Endothelial cell of umbilical vein (primary cell): ENCODE measurements at regions of chr7 and their contacts with region 1.

Region 1: GRCh38 chr7:22726345-22727185 is 435 bp upstream of the IL6 start:
- DNase-seq: peak; percentile 84
- H3K4me3 ChIP-seq: peak overlapping the region; percentile 21 to 84 (median 42)
- H3K27ac ChIP-seq: peak overlapping the region; percentile 93
- H3K4me1 ChIP-seq: peaks cover 51% of the 10 kb centered on the region
- H3K27me3 ChIP-seq: no peaks in the 10 kb centered on the region
- CTCF ChIP-seq: peak; percentile 56 to 62
- POLR2A ChIP-seq: no peak

Region 2: GRCh38 chr7:22577396-22578001 is 149.1 kb before region 1 on chr7:
- CTCF ChIA-PET with region 1: interaction called, 88 read pairs
- POLR2A ChIA-PET with region 1: interaction called, 20 read pairs
- dilution Hi-C with region 1: loop called (anchors 25 kb)
- intact Hi-C with region 1: loop called (anchors 1 kb)
- DNase-seq: peak; percentile 94
- H3K4me3 ChIP-seq: peak overlapping the region in 1 of 3 experiments; percentile 34
- H3K27ac ChIP-seq: peak overlapping the region; percentile 99
- H3K4me1 ChIP-seq: peaks cover 47% of the 10 kb centered on the region
- H3K27me3 ChIP-seq: no peaks in the 10 kb centered on the region
- CTCF ChIP-seq: no peak
- POLR2A ChIP-seq: peak; percentile 20

Region 3: GRCh38 chr7:22601812-22602565 is 124.6 kb before region 1 on chr7:
- CTCF ChIA-PET with region 1: interaction called, 11 read pairs
- POLR2A ChIA-PET with region 1: no interaction called
- dilution Hi-C with region 1: no loop called
- intact Hi-C with region 1: no loop called
- DNase-seq: peak; percentile 34
- H3K4me3 ChIP-seq: no peak overlapping the region
- H3K27ac ChIP-seq: peak overlapping the region; percentile 71
- H3K4me1 ChIP-seq: peaks cover 39% of the 10 kb centered on the region
- H3K27me3 ChIP-seq: no peaks in the 10 kb centered on the region
- CTCF ChIP-seq: no peak
- POLR2A ChIP-seq: no peak

Region 4: DNA sequence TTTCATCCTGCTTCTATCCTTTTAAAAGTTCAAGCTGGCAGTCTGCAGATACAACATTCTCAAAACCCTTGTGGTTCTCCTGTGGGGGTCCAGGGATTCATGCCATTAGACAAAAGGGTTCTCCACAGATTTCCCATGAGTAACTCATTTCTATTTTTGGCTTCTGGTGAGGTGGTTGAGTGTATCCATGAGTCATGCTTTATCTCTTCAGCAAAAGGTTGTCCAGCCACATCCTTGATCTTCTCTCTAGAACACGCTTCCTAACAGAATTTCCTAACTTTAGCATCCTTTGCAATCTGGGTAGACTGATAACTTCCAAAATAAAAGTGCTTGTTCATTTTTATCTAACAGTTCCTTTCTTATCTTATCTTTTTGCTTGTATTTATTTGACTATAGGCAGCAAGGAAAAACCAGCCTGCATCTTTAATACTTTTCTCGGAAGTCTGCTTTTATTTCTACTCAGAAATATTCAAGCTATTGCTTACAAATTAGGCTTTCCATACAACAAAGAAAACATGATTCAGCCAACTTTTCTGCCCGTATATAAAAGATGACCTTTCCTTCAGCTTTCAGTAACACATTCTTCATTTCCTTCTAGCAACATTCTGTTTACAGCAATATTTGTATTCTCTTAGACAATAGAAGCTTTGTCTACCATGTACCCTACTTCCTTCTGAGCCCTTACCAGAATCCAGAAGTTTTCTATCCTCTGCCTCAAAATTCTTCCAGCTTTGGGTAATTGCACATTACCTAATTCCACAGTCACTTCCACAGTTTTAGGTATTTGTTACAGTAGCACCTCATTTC is 78.9 kb before region 1 on chr7:
- CTCF ChIA-PET with region 1: interaction called, 19 read pairs
- POLR2A ChIA-PET with region 1: interaction called, 7 read pairs
- dilution Hi-C with region 1: no loop called
- intact Hi-C with region 1: loop called (anchors 1 kb)
- DNase-seq: peak; percentile 74
- H3K4me3 ChIP-seq: no peak overlapping the region
- H3K27ac ChIP-seq: peak overlapping the region; percentile 93
- H3K4me1 ChIP-seq: peaks cover 49% of the 10 kb centered on the region
- H3K27me3 ChIP-seq: no peaks in the 10 kb centered on the region
- CTCF ChIP-seq: no peak
- POLR2A ChIP-seq: peak; percentile 31

Region 5: DNA sequence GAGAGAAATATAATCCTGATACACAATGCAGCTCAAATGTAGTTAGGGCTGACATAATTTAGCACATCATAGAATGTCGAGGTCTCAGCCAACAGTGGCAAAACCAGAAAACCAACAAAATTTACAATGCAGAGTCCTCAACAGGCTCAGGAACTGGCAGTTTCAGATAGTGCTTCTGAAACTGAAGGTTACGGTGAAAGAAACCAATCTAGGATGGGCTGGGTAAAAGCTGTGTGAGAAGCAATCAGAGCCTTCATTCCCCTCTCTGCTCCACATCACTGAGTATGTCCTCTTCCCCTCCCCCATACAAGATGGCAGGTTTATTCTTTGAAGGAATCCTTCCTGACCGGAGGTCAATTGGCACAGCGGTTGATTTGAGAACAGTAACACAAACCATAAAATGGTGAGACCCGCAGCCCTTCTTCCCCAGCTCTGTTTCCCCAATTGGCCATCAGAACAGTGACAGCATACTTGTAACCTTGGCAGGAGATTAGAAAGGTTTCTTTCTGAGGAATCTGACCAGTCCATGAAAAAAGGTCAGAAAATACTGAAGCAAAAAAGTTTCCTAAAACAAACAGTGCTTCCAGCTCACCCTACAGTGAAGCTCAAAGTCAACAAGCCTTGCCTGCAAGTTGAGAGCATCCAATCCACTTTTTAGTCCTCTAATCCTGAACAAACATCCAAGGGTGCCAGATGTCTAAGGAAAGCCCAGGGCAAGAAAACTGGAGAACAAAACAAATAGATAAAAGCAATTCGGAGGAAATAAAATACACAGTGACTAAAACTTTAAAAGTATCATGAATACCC is 53.5 kb before region 1 on chr7:
- CTCF ChIA-PET with region 1: interaction called, 24 read pairs
- POLR2A ChIA-PET with region 1: no interaction called
- dilution Hi-C with region 1: no loop called
- intact Hi-C with region 1: loop called (anchors 1 kb)
- DNase-seq: no peak
- H3K4me3 ChIP-seq: no peak overlapping the region
- H3K27ac ChIP-seq: no peak overlapping the region
- H3K4me1 ChIP-seq: peaks cover 65% of the 10 kb centered on the region
- H3K27me3 ChIP-seq: no peaks in the 10 kb centered on the region
- CTCF ChIP-seq: no peak
- POLR2A ChIP-seq: no peak

Region 6: DNA sequence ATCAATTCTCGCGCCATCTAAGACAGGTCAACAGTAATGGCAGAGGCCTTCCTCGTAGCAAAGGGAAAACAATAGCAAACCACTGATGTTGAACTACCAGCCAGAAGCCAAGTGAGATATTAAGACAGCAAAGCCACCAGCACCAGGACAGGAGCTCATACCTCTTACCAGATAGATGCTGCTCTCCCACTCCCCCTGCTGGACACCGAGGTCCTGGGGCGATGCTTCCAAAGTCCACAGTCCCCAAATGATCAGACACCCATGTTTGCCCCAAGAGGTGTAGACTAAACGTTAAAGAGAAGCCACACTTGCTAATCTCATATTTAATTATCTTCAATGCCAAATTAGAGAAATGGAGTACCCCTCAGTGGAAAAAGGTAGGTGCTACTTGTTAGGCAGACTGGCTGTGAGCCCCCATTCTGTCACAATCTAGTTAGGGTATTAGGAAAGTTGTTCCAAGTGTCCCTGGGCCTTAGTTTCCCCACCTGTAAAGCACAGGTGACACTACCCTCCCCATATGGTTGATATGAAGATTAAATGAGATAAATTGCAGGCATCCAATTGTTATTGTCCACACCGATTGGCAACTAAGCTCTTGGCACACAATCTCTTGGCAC is 56.2 kb after region 1 on chr7:
- CTCF ChIA-PET with region 1: interaction called, 55 read pairs
- POLR2A ChIA-PET with region 1: no interaction called
- dilution Hi-C with region 1: no loop called
- intact Hi-C with region 1: loop called (anchors 1 kb)
- DNase-seq: peak; percentile 65
- H3K4me3 ChIP-seq: no peak overlapping the region
- H3K27ac ChIP-seq: no peak overlapping the region
- H3K4me1 ChIP-seq: no peaks in the 10 kb centered on the region
- H3K27me3 ChIP-seq: no peaks in the 10 kb centered on the region
- CTCF ChIP-seq: peak; percentile 94 to 95
- POLR2A ChIP-seq: no peak

Region 7: DNA sequence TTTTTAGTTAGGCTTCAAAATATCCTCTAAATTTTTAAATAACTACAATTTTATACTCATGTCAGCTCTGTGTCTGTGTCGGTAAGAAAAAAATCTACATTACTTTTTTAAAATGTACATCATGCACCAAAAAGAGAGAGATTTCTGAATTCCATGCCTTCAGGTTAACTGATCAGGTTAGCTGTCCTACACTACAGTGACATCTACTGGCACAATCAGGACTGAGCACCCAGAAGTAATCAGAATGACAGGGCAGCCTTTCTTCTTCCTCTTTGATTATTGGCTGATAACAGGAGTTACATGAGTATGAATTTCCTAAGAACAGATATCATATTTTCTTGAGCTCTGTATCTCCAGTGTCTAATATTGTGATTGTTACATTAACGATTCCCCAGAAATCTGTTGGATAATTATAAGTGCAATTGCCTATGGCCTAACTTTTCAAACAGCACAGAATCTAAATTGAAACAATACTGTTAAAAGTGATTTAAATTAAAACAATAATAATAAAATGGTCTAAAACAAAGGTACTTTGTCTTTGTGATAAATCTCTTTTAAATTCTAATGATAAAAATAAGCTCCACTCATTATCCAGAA is 329.1 kb after region 1 on chr7:
- CTCF ChIA-PET with region 1: interaction called, 36 read pairs
- POLR2A ChIA-PET with region 1: no interaction called
- dilution Hi-C with region 1: no loop called
- intact Hi-C with region 1: loop called (anchors 1 kb)
- DNase-seq: peak; percentile 76
- H3K4me3 ChIP-seq: no peak overlapping the region
- H3K27ac ChIP-seq: no peak overlapping the region
- H3K4me1 ChIP-seq: no peaks in the 10 kb centered on the region
- H3K27me3 ChIP-seq: no peaks in the 10 kb centered on the region
- CTCF ChIP-seq: peak; percentile 73 to 76
- POLR2A ChIP-seq: no peak